Astrocyte of the cerebellum (primary cell): ENCODE measurements at regions of chr15 and their contacts with region 1.

Region 1: DNA sequence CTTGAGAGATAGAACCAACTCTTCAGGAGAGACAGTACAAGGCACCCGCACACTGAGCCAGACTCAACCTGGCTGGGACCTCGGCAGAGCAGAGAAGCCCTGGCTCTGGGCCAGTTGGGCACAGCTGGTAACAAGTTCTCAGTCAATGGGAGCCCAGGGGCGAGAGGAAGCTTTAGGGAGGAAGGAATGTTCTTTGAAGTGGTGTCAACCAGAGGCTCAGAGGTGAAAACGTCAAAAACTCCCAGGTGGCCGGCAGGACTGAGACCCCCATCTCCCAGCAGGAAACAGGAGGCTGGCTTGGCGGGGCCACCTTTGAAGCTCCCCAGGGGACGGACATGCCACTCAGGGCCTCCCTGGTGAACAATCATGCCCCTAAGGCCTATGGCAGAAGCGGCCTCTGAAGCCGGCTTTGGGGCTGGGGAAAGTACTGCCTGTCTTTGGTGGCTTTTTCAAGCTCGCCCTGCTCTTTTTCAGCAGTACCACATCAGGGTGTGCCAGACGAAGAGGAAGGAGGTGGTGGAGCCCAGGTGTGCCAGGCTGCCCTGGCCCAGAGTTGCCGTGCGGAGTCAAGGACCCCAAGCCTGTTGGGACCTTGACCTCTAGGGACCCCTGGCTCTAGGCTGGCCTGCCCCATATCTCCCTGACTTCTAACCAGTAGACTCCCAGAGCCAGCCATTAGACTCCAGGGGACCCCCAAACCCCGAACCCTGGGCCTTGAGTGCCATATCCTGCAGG is 16.7 kb upstream of the TBC1D21 start:
- DNase-seq: no peak
- H3K4me3 ChIP-seq: no peak overlapping the region
- CTCF ChIP-seq: no peak

Region 2: DNA sequence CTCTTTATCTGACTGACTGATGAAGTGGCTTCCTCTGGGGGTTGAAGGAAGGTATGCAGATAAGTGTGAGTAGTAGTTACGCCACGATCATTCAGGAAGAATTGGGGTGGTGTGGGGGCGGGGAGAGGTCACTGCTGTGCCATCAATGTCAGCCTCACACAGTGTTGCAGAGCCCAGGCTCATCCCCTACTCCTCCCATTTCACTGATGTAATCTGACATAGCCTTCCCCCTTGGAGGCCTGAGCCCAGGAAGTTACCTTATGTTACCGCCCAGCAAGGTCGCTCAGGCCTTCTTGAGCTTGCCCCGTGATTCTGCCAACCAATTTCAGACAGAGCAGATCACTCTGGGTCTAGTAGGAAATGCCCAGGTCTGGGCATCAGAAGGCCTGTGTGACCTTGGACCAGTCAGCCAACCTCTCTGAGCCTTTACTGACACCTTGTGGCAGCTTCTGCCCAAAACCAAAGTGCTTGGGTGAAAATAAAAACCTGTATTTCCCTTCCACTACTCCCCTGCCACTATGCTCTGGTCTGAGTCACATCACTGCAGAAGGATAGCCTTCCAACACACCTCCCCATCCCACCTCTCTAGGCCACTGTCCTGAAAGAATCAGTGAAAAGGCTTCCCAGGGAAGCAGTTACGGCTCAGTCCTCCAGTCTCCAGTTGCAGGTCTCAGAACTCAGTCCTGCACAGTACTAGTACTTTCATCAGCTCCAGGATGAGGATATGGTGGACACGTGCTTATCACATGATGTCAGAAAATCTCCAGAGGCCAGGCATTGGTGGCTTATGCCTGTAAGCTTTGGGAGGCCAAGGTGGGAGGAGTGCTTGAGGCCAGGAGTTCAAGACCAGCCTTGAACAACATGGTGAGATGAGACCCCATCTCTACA is 75.3 kb before region 1 on chr15:
- in situ Hi-C with region 1: no loop called
- DNase-seq: no peak
- H3K4me3 ChIP-seq: no peak overlapping the region
- CTCF ChIP-seq: peak; percentile 25

Region 3: GRCh38 chr15:73794443-73795133 is 62.0 kb before region 1 on chr15:
- in situ Hi-C with region 1: loop called (anchors 5 kb)
- DNase-seq: no peak
- H3K4me3 ChIP-seq: no peak overlapping the region
- CTCF ChIP-seq: no peak